ENCODE measurements at regions of chr3 and their contacts with region 1.

Region 1: GRCh38 chr3:17233398-17233800 is 348.6 kb downstream of the PLCL2 start:
- DNase-seq: peak; percentile 75
- H3K4me3 Mint-ChIP-seq: no peak overlapping the region
- H3K27ac Mint-ChIP-seq: no peak overlapping the region
- H3K4me1 Mint-ChIP-seq: peaks cover 5% of the 10 kb centered on the region
- H3K27me3 Mint-ChIP-seq: no peaks in the 10 kb centered on the region
- CTCF ChIP-seq: peak; percentile 73

Region 2: DNA sequence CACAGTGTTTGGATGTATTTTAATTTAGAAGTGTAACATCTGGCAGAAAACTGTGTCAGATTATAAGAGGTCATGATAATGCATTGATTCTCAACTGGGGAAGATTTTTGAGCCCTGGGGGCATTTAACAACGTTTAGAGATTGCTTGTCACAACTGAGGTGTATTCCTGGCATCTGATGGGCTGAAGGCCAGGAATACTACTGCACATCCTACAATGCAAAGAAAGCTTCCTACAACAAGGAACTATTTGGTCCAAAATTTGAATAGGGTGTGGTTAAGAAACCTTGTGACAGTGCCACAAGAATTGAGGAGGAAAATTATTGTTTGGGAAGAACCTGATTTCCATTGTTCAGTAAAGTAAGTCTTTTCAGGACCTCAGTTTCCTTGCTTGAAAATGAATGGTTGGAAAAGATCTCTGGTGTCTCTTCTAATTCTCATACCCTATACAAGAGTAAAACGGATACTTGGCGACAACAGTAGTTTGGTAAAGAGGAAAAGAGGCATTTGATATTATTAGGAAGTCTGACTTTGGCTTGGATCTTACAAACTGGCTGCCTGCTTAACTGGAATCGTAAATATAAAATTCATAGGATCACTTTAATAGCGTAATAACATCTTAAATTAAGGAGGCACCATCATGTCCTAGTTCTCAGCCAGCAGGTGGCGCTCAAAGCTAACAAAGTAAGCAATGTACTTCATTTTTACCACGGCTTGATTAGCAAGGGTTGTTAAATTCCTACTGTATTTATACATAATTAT is 632.4 kb before region 1 on chr3:
- CTCF ChIA-PET with region 1: interaction called, 17 read pairs
- POLR2A ChIA-PET with region 1: interaction called, 4 read pairs
- intact Hi-C with region 1: loop called (anchors 1 kb)
- DNase-seq: peak; percentile 80
- H3K4me3 Mint-ChIP-seq: no peak overlapping the region
- H3K27ac Mint-ChIP-seq: no peak overlapping the region
- H3K4me1 Mint-ChIP-seq: no peaks in the 10 kb centered on the region
- H3K27me3 Mint-ChIP-seq: peaks cover 54% of the 10 kb centered on the region
- CTCF ChIP-seq: peak; percentile 69

Region 3: GRCh38 chr3:16834212-16834611 is 399.2 kb before region 1 on chr3:
- CTCF ChIA-PET with region 1: no interaction called
- POLR2A ChIA-PET with region 1: no interaction called
- intact Hi-C with region 1: loop called (anchors 5 kb)
- DNase-seq: peak; percentile 9
- H3K4me3 Mint-ChIP-seq: no peak overlapping the region
- H3K27ac Mint-ChIP-seq: no peak overlapping the region
- H3K4me1 Mint-ChIP-seq: no peaks in the 10 kb centered on the region
- H3K27me3 Mint-ChIP-seq: peaks cover 41% of the 10 kb centered on the region
- CTCF ChIP-seq: no peak

Region 4: GRCh38 chr3:16945330-16945729 is 288.1 kb before region 1 on chr3:
- CTCF ChIA-PET with region 1: interaction called, 3 read pairs
- POLR2A ChIA-PET with region 1: no interaction called
- intact Hi-C with region 1: loop called (anchors 5 kb)
- DNase-seq: peak; percentile 50
- H3K4me3 Mint-ChIP-seq: no peak overlapping the region
- H3K27ac Mint-ChIP-seq: no peak overlapping the region
- H3K4me1 Mint-ChIP-seq: peaks cover 8% of the 10 kb centered on the region
- H3K27me3 Mint-ChIP-seq: peaks cover 49% of the 10 kb centered on the region
- CTCF ChIP-seq: no peak

Region 5: DNA sequence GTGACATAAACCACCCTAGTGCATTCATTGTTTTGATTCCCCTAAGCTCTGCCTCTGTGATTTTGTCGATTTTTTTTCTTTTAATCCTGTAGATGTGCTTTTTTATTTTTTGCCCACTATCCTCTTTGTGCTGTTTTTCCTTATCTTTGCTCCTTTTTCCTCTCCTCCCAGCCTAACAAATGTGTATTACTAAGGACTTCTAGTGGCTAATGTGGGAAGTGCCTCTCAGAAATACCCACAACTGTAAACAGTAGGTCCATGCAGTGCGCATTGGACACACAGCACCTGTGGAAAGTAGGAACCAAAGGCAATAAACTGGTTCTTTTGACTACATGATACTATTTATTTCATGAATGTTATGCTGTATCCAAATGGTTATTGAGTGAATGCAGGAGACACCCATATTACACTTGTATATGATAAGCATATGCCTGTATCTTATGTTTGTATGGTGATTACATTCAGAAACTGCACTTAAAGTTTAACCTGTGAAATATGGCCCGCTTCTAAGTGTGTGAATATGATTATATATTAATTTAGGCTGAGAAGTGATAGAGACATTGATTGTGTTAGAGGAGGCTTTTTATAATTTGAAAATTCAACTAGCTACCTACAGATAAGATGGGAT is 200.9 kb before region 1 on chr3:
- CTCF ChIA-PET with region 1: interaction called, 13 read pairs
- POLR2A ChIA-PET with region 1: no interaction called
- intact Hi-C with region 1: no loop called
- DNase-seq: peak; percentile 42
- H3K4me3 Mint-ChIP-seq: no peak overlapping the region
- H3K27ac Mint-ChIP-seq: no peak overlapping the region
- H3K4me1 Mint-ChIP-seq: peaks cover 9% of the 10 kb centered on the region
- H3K27me3 Mint-ChIP-seq: no peaks in the 10 kb centered on the region
- CTCF ChIP-seq: peak; percentile 48

Region 6: GRCh38 chr3:17039580-17039979 is 193.8 kb before region 1 on chr3:
- CTCF ChIA-PET with region 1: interaction called, 3 read pairs
- POLR2A ChIA-PET with region 1: no interaction called
- intact Hi-C with region 1: loop called (anchors 1 kb)
- DNase-seq: peak; percentile 85
- H3K4me3 Mint-ChIP-seq: no peak overlapping the region
- H3K27ac Mint-ChIP-seq: peak overlapping the region; percentile 21
- H3K4me1 Mint-ChIP-seq: peaks cover 13% of the 10 kb centered on the region
- H3K27me3 Mint-ChIP-seq: no peaks in the 10 kb centered on the region
- CTCF ChIP-seq: no peak

Region 7: DNA sequence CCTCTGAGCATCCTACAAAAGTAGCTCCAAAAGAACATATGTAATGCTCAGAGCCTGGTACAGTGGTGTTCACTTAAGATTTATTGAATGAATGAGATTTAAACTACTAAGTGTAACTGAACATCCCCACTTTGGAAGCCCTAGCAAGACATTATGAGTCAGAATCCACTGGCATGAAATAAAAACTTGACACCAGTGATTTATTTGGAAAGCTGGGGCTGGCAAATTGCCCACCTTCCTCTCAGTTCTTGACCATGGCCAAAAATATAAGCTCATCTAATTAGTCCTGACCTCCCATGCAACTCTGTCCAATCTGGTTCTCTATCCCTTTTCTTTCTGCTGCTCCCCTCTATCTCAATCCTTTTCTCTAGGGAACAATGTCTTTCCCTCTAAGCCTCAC is 69.4 kb after region 1 on chr3:
- CTCF ChIA-PET with region 1: no interaction called
- POLR2A ChIA-PET with region 1: no interaction called
- intact Hi-C with region 1: no loop called
- DNase-seq: peak; percentile 27
- H3K4me3 Mint-ChIP-seq: no peak overlapping the region
- H3K27ac Mint-ChIP-seq: no peak overlapping the region
- H3K4me1 Mint-ChIP-seq: no peaks in the 10 kb centered on the region
- H3K27me3 Mint-ChIP-seq: no peaks in the 10 kb centered on the region
- CTCF ChIP-seq: no peak